GM10248 (cell line): ENCODE measurements at regions of chr1 and their contacts with region 1.

Region 1: GRCh38 chr1:108925920-108926319 is 37.4 kb downstream of the CLCC1 start:
- DNase-seq: peak; percentile 15
- CTCF ChIP-seq: no peak

Region 2: GRCh38 chr1:108947871-108948525 is 22.1 kb after region 1 on chr1:
- CTCF ChIA-PET with region 1: interaction called, 12 read pairs
- POLR2A ChIA-PET with region 1: no interaction called
- DNase-seq: no peak
- CTCF ChIP-seq: no peak